CD4-positive, alpha-beta T cell (primary cell): ENCODE measurements at regions of chr9 and their contacts with region 1.

Region 1: DNA sequence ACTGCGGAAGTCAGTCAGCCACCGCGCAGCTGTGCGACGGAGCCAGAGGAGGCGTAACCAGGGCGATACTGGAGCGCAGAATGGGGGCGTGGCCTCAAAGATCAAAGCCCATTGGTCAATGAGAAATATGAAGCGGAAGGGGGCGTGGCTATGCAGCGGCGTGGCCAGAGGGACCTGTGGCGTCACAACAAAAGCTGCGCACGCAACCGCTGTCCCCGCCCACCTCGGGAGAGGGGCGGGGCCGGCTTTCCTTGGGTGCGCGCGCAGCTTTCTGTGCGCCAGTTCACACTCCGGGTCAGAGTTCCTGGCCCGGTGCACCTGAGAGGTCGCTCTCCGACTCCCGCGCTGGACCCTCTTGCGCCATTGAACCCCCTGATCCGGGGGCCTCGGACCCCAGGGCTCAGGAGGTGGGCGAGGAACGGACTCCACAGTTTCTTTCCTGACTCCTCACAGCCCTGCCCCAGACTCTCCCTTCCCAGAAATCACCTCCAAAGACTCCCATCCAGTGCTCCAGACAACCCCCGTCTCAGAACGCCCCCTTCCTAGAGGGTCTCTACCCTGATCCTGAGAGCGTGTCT is at the starts of genes GOLGA2 and SWI5:
- DNase-seq: peak; percentile 99 to 100 (median 100)
- ATAC-seq: peak; percentile 96
- H3K4me3 ChIP-seq: peak within 1 kb of the TSS; percentile 98
- H3K4me3 Mint-ChIP-seq: peak within 1 kb of the TSS; percentile 98
- H3K27ac ChIP-seq: peak within 1 kb of the TSS; percentile 70 to 72
- H3K27ac Mint-ChIP-seq: peak within 1 kb of the TSS; percentile 88
- H3K4me1 ChIP-seq: peaks cover 31% of the 10 kb centered on the region
- H3K4me1 Mint-ChIP-seq: peaks cover 36% of the 10 kb centered on the region
- H3K27me3 ChIP-seq: no peaks in the 10 kb centered on the region
- H3K27me3 Mint-ChIP-seq: no peaks in the 10 kb centered on the region
- CTCF ChIP-seq: no peak
- total RNA-seq, gene GOLGA2: 44.3 to 48.3 TPM
- total RNA-seq, gene SWI5: 3.0 to 4.1 TPM

Region 2: DNA sequence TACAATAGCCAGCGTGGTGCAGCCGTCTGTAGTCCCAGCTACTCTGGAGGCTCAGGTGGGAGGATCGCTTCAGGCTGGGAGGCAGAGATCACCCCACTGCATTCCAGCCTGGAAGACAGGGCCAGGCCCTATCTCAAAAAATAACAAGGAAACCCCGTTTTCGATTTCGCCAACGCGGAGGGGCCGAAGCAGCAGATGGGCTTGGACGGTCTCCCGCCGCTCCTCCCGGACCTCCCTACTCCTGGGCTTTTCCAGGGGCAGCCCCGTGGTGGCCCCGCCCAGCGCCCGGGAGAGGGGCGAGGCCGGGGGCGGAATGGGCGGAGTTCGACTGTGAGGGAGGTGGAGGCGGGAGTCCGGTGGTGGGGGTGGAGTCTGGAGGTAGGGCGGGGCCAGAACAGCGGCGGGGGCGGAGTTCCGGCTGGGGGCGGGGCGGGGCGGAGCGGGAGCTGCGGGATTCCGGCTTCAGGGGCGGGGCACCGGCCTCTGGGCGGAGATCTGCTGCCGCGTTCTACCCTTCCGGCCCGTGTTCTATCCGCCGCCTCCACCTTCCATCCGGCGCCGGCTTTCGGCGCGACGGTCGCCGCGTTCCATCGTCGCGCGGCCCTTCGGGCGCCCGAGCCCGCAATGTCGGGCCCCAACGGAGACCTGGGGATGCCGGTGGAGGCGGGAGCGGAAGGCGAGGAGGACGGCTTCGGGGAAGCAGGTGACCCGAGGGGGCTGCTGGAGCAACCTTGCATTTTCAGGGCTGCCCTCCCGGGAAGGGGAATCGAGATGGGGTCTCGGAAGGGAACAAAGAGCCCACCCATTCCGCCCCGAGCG is 116.1 kb before region 1 on chr9 and contains the start of gene BBLN:
- CTCF ChIA-PET with region 1: no interaction called
- POLR2A ChIA-PET with region 1: interaction called, 5 read pairs
- intact Hi-C with region 1: loop called in 1 of 2 experiments (anchors 1 kb)
- DNase-seq: peak; percentile 86 to 97 (median 92)
- ATAC-seq: peak; percentile 78
- H3K4me3 ChIP-seq: peak within 1 kb of the TSS; percentile 97
- H3K4me3 Mint-ChIP-seq: peak within 1 kb of the TSS; percentile 89
- H3K27ac ChIP-seq: peak within 1 kb of the TSS; percentile 77 to 86
- H3K27ac Mint-ChIP-seq: peak within 1 kb of the TSS; percentile 92
- H3K4me1 ChIP-seq: peaks cover 24% of the 10 kb centered on the region
- H3K4me1 Mint-ChIP-seq: peaks cover 20% of the 10 kb centered on the region
- H3K27me3 ChIP-seq: no peaks in the 10 kb centered on the region
- H3K27me3 Mint-ChIP-seq: no peaks in the 10 kb centered on the region
- CTCF ChIP-seq: no peak
- total RNA-seq, gene BBLN: 53.6 to 55.9 TPM

Region 3: DNA sequence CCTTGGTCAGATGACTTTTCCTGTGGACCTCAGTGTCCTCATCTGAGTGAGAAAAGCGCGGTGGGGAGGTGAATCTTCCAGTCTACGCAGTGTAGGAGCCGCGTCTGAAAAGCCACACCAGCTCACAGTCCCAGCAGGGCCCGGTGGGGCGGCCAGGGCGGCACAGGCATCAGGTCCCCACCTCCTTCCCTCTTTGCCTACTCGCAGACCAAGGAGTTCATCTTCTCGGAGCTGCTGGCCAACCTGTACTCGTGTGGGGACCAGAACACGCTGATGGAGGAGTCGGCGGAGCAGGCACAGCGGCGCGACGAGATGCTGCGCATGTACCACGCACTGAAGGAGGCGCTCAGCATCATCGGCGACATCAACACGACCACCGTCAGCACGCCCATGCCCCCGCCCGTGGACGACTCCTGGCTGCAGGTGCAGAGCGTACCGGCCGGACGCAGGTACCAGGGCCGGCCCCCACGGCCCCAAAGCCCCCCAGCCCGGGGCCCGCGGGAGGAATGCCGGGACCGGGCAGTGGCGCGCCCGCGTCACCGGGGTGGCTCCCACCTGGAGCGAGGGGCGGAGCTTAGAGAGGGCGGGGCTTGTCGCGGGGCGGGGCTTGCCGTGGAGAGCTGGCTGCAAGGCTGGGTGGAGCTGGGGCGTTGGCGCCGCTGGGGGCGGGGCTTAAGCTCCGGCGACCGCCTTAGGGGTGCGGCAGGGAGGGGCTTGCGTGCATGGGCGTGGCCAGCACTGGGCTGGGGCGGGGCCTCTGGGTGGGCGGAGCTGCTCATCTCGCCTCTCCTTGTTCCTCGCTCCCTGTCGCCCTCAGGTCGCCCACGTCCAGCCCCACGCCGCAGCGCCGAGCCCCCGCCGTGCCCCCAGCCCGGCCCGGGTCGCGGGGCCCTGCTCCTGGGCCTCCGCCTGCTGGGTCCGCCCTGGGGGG is 25.9 kb before region 1 on chr9:
- CTCF ChIA-PET with region 1: interaction called, 3 read pairs
- POLR2A ChIA-PET with region 1: interaction called, 29 read pairs
- intact Hi-C with region 1: loop called in 1 of 2 experiments (anchors 2 kb)
- DNase-seq: peak; percentile 96 to 100 (median 99)
- ATAC-seq: peak; percentile 92
- H3K4me3 ChIP-seq: peak overlapping the region; percentile 56
- H3K4me3 Mint-ChIP-seq: peak overlapping the region; percentile 91
- H3K27ac ChIP-seq: peak overlapping the region; percentile 36 to 37
- H3K27ac Mint-ChIP-seq: peak overlapping the region; percentile 97
- H3K4me1 ChIP-seq: peaks cover 22% of the 10 kb centered on the region
- H3K4me1 Mint-ChIP-seq: peaks cover 22% of the 10 kb centered on the region
- H3K27me3 ChIP-seq: no peaks in the 10 kb centered on the region
- H3K27me3 Mint-ChIP-seq: peaks cover 10% of the 10 kb centered on the region
- CTCF ChIP-seq: no peak

Region 4: GRCh38 chr9:128370826-128371621 is 94.9 kb after region 1 on chr9 and contains the start of gene URM1:
- CTCF ChIA-PET with region 1: interaction called, 3 read pairs
- POLR2A ChIA-PET with region 1: interaction called, 16 read pairs
- intact Hi-C with region 1: loop called in 1 of 2 experiments (anchors 1 kb)
- DNase-seq: peak; percentile 90 to 98 (median 94)
- ATAC-seq: peak; percentile 94
- H3K4me3 ChIP-seq: peak within 1 kb of the TSS; percentile 93
- H3K4me3 Mint-ChIP-seq: peak within 1 kb of the TSS; percentile 97
- H3K27ac ChIP-seq: peak within 1 kb of the TSS; percentile 68 to 92
- H3K27ac Mint-ChIP-seq: peak within 1 kb of the TSS; percentile 94
- H3K4me1 ChIP-seq: peaks cover 20% of the 10 kb centered on the region
- H3K4me1 Mint-ChIP-seq: peaks cover 34% of the 10 kb centered on the region
- H3K27me3 ChIP-seq: no peaks in the 10 kb centered on the region
- H3K27me3 Mint-ChIP-seq: no peaks in the 10 kb centered on the region
- CTCF ChIP-seq: no peak
- total RNA-seq, gene URM1: 28.4 to 28.8 TPM

Region 5: GRCh38 chr9:128504485-128505413 is 228.7 kb after region 1 on chr9 and contains the start of gene GLE1:
- CTCF ChIA-PET with region 1: no interaction called
- POLR2A ChIA-PET with region 1: no interaction called
- intact Hi-C with region 1: no loop called
- DNase-seq: peak; percentile 93 to 99 (median 97)
- ATAC-seq: peak; percentile 94
- H3K4me3 ChIP-seq: peak within 1 kb of the TSS; percentile 99
- H3K4me3 Mint-ChIP-seq: peak within 1 kb of the TSS; percentile 100
- H3K27ac ChIP-seq: peak within 1 kb of the TSS; percentile 80 to 92
- H3K27ac Mint-ChIP-seq: peak within 1 kb of the TSS; percentile 97
- H3K4me1 ChIP-seq: peaks cover 27% of the 10 kb centered on the region
- H3K4me1 Mint-ChIP-seq: peaks cover 41% of the 10 kb centered on the region
- H3K27me3 ChIP-seq: no peaks in the 10 kb centered on the region
- H3K27me3 Mint-ChIP-seq: no peaks in the 10 kb centered on the region
- CTCF ChIP-seq: no peak
- total RNA-seq, gene GLE1: 8.0 to 8.4 TPM

Region 6: GRCh38 chr9:129028192-129028957 is 752.3 kb after region 1 on chr9 and contains the start of gene SH3GLB2:
- CTCF ChIA-PET with region 1: no interaction called
- POLR2A ChIA-PET with region 1: interaction called, 4 read pairs
- intact Hi-C with region 1: loop called in 1 of 2 experiments (anchors 5 kb)
- DNase-seq: peak; percentile 88 to 98 (median 92)
- ATAC-seq: peak; percentile 84
- H3K4me3 ChIP-seq: peak within 1 kb of the TSS; percentile 78
- H3K4me3 Mint-ChIP-seq: peak within 1 kb of the TSS; percentile 87
- H3K27ac ChIP-seq: peak within 1 kb of the TSS; percentile 12 to 53
- H3K27ac Mint-ChIP-seq: peak within 1 kb of the TSS; percentile 81
- H3K4me1 ChIP-seq: peaks cover 34% of the 10 kb centered on the region
- H3K4me1 Mint-ChIP-seq: peaks cover 25% of the 10 kb centered on the region
- H3K27me3 ChIP-seq: no peaks in the 10 kb centered on the region
- H3K27me3 Mint-ChIP-seq: no peaks in the 10 kb centered on the region
- CTCF ChIP-seq: no peak
- total RNA-seq, gene SH3GLB2: 65.6 to 69.1 TPM